ENCODE measurements at regions of chr7 and their contacts with region 1.

Region 1: DNA sequence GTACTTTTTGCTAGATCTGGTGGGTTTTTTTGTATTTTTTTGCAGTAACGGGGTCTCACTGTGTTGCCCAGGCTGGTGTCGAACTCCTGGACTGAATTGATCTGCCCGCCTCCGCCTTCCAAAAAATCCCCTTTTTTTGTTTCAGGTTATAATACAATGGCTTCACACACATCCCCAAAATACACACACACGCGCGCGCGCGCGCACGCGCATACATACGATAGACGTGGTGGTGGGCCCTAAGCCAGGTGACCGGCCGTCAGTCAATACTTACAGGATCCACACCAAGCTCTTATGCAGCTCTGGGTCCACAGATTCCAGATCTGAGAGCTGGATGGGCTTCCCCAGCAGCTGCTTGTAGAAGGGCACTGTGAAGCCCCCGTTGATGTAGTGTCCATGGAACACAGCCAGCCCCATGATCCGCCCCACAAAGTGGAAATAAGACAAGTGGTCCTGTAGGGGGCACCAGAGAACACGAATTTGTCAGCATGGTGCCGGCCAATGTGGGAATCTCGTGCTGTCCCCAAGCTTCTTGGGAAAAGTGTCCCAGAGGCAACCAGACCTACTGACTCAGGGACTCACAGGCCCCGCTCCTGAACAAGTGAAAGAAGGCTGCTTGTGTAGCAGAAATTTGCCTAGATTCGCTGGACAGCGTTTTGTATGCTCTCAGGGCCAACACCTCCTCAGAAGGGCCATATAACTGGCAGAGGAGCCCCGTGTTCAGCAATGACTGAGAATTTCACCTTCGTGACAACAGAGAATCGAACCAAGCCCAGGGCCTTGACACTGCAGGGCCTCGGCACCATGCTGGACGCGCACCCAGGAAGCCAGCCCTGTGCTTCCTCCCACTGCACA is 103.6 kb downstream of the SMURF1 start:
- DNase-seq: peak; percentile 70 to 81 (median 75)
- H3K4me3 ChIP-seq: no peak overlapping the region
- H3K27ac ChIP-seq: no peak overlapping the region
- H3K4me1 ChIP-seq: no peaks in the 10 kb centered on the region
- H3K27me3 ChIP-seq: no peaks in the 10 kb centered on the region

Region 2: GRCh38 chr7:99024066-99024465 is 16.3 kb before region 1 on chr7:
- CTCF ChIA-PET with region 1: interaction called, 18 read pairs
- POLR2A ChIA-PET with region 1: no interaction called
- DNase-seq: no peak
- H3K4me3 ChIP-seq: no peak overlapping the region
- H3K27ac ChIP-seq: no peak overlapping the region
- H3K4me1 ChIP-seq: peaks cover 0 to 8% (median 2%) of the 10 kb centered on the region in 4 experiments
- H3K27me3 ChIP-seq: no peaks in the 10 kb centered on the region

Region 3: DNA sequence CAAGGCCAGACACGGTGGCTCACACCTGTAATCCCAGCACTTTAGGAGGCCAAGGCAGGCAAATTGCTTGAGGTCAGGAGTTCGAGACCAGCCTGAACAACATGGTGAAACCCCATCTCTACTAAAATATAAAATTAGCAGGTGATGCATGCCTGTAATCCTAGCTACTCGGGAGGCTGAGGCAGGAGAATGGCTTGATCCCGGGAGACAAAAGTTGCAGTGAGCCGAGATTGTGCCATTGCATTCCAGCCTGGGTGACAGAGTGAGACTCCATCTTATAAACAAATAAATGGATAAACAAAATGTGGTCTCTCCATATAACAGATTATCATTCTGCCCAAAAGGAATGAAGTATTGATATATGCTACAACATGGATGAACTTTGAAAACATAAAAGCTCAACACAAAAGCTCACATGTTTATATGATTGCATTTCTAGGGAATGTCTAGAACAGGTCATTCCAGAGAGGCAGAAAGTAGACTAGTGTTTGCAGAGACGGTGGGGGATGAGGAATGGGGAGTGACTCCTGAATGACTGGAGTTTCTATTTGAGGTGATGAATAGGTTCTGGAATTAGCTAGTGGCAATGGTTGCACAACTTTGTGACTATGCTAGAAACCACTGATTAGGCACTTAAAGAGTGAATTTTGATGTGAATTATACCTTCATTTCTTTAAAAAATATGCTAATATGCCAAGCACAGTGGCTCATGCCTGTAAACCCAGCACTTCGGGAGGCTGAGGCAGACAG is 160.5 kb after region 1 on chr7:
- CTCF ChIA-PET with region 1: no interaction called
- POLR2A ChIA-PET with region 1: no interaction called
- DNase-seq: no peak
- H3K4me3 ChIP-seq: no peak overlapping the region
- H3K27ac ChIP-seq: no peak overlapping the region
- H3K4me1 ChIP-seq: peaks cover 0 to 5% (median 0%) of the 10 kb centered on the region in 4 experiments
- H3K27me3 ChIP-seq: no peaks in the 10 kb centered on the region

Region 4: GRCh38 chr7:99312316-99313203 is 272.2 kb after region 1 on chr7:
- CTCF ChIA-PET with region 1: interaction called, 98 read pairs
- POLR2A ChIA-PET with region 1: no interaction called
- DNase-seq: peak; percentile 55 to 79 (median 69)
- H3K4me3 ChIP-seq: peak overlapping the region in 1 of 7 experiments; percentile 57
- H3K27ac ChIP-seq: no peak overlapping the region
- H3K4me1 ChIP-seq: no peaks in the 10 kb centered on the region
- H3K27me3 ChIP-seq: no peaks in the 10 kb centered on the region

Measured in common myeloid progenitor, CD34-positive (primary cell).